CD8-positive, alpha-beta T cell (primary cell): ENCODE measurements at regions of chr1 and their contacts with region 1.

Region 1: GRCh38 chr1:185044981-185045813 is at the start of gene RNF2:
- DNase-seq: peak; percentile 61 to 95 (median 84)
- ATAC-seq: peak; percentile 91
- H3K4me3 ChIP-seq: peak within 1 kb of the TSS; percentile 74 to 85
- H3K4me3 Mint-ChIP-seq: peak within 1 kb of the TSS; percentile 92
- H3K27ac ChIP-seq: peak within 1 kb of the TSS; percentile 62 to 81
- H3K27ac Mint-ChIP-seq: peak within 1 kb of the TSS; percentile 93
- H3K4me1 ChIP-seq: peaks cover 23% of the 10 kb centered on the region
- H3K4me1 Mint-ChIP-seq: peaks cover 46% of the 10 kb centered on the region
- H3K27me3 ChIP-seq: no peaks in the 10 kb centered on the region
- H3K27me3 Mint-ChIP-seq: no peaks in the 10 kb centered on the region
- CTCF ChIP-seq: no peak
- total RNA-seq, gene RNF2: 13.3 to 13.6 TPM

Region 2: DNA sequence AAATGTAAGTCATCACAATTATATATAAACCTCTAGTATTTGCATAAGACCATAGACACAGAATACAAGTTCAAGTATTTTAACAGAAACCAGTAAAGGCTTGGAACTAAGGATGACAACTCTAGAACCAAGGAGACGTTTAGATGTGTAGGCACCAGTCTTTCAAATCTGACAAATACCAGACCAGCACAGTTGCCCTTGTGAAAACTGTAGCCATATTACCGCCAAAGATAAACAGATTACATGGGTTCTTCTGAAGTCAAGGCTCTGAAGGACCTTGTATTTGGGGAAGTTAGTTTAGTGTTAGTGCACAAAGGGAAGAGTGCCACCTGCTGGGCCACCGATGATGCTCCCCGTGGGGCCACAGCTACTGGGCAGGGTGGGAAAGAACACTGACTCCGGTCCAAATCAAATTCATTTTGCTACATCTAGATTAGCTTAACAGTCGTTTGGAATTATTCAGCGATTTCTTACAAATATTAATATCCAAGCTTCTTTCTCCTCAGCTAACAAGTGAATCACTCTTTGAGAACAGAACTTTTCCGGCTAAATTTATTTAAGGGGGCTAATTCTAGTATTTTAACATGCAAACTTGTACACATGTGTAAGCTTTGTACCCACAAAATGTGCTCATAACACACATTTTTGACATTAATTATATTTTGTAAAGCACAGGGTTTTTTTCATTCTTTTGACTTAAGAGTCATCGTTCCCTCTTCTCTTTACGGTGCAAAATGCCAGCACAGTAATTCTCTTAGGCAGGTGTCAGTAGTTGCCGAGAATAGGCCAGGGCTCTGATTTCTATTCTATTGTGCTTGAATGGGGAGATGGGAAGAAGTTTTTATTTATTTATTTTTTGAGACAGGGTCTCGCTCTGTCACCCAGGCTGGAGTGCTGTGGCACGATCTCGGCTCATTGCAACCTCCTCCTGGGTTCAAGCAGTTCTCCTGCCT is 62.9 kb before region 1 on chr1:
- CTCF ChIA-PET with region 1: interaction called, 3 read pairs
- POLR2A ChIA-PET with region 1: no interaction called
- intact Hi-C with region 1: loop called in 1 of 2 experiments (anchors 5 kb)
- DNase-seq: peak; percentile 57 to 86 (median 78)
- ATAC-seq: peak; percentile 97
- H3K4me3 ChIP-seq: no peak overlapping the region
- H3K4me3 Mint-ChIP-seq: no peak overlapping the region
- H3K27ac ChIP-seq: no peak overlapping the region
- H3K27ac Mint-ChIP-seq: no peak overlapping the region
- H3K4me1 ChIP-seq: no peaks in the 10 kb centered on the region
- H3K4me1 Mint-ChIP-seq: peaks cover 5% of the 10 kb centered on the region
- H3K27me3 ChIP-seq: no peaks in the 10 kb centered on the region
- H3K27me3 Mint-ChIP-seq: peaks cover 20% of the 10 kb centered on the region
- CTCF ChIP-seq: peak; percentile 87

Region 3: DNA sequence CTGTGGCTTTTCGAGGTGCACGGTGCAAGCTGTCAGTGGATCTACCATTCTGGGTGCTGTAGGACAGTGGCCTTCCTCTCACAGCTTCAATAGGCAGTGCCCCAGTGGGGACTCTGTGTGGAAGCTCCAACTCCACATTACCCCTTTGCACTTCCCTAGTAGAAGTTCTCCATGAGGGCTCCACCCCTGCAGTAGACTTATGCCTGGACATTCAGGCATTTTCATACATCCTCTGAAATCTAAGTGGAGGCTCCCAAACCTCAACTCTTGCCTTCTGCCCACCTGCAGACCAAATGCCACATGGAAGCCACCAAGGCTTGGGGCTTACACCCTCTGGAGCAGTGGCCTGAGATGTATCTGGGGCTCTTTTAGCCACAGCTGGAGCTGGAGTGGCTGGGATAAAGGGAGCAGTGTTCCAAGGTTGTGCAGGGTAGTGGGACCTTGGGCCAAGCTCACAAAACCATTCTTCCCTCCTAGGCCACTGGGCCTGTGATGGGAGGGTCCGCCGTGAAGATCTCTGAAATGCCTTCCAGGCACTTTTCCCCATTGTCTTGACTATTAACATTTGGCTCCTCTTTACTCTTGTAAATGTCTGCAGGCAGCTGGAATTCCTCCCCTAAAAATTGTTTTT is 17.8 kb before region 1 on chr1:
- CTCF ChIA-PET with region 1: no interaction called
- POLR2A ChIA-PET with region 1: no interaction called
- intact Hi-C with region 1: no loop called
- DNase-seq: no peak
- ATAC-seq: no peak
- H3K4me3 ChIP-seq: no peak overlapping the region
- H3K4me3 Mint-ChIP-seq: no peak overlapping the region
- H3K27ac ChIP-seq: no peak overlapping the region
- H3K27ac Mint-ChIP-seq: no peak overlapping the region
- H3K4me1 ChIP-seq: no peaks in the 10 kb centered on the region
- H3K4me1 Mint-ChIP-seq: no peaks in the 10 kb centered on the region
- H3K27me3 ChIP-seq: peaks cover 0 to 4% of the 10 kb centered on the region in 2 experiments
- H3K27me3 Mint-ChIP-seq: peaks cover 16% of the 10 kb centered on the region
- CTCF ChIP-seq: no peak

Region 4: DNA sequence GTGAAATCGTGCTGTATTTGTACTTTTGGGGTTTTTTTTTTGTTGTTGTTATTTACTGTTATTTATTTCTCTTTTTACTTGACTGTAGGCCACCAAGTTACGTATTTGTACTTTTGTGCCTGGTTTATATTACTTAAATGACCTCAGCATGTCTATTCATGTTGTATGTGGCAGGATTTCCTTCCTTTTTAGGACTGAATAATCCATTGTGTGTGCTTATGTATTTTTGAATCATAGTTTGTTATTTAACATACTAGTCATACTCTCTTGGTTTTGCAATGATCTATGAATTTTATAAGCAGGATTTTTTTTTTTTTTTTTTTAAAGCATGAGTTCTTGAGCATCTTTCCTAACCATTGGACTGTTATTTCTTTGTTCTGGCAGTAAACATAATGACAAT is 51.3 kb after region 1 on chr1:
- CTCF ChIA-PET with region 1: no interaction called
- POLR2A ChIA-PET with region 1: no interaction called
- intact Hi-C with region 1: loop called in 1 of 2 experiments (anchors 2 kb)
- DNase-seq: no peak
- ATAC-seq: no peak
- H3K4me3 ChIP-seq: no peak overlapping the region
- H3K4me3 Mint-ChIP-seq: no peak overlapping the region
- H3K27ac ChIP-seq: no peak overlapping the region
- H3K27ac Mint-ChIP-seq: no peak overlapping the region
- H3K4me1 ChIP-seq: no peaks in the 10 kb centered on the region
- H3K4me1 Mint-ChIP-seq: no peaks in the 10 kb centered on the region
- H3K27me3 ChIP-seq: no peaks in the 10 kb centered on the region
- H3K27me3 Mint-ChIP-seq: no peaks in the 10 kb centered on the region
- CTCF ChIP-seq: no peak

Region 5: DNA sequence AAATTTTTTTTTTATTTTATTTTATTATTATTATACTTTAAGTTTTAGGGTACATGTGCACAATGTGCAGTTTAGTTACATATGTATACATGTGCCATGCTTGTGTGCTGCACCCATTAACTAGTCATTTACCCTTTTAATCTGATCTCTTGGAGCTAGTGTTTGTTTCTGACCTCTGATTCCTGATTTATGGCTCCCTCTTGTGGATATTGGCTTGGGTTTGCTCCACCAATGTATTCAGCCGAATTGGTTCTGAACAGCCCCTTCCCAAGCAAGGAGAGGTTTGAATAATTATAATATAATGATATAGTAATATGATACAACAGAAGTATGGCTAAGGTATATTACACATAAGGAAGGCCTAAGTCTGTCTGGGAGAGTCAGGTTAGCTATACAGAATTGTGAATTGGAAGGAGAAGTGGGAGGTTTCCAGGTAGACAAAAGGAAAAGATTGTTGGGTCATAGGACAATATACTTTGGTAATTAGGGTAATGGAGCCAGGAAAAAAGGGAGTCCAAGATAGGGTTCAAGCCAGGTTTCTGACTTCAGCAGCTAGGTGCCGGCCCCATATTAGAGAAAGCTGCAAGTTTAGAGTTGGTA is 635.9 kb after region 1 on chr1:
- CTCF ChIA-PET with region 1: no interaction called
- POLR2A ChIA-PET with region 1: no interaction called
- intact Hi-C with region 1: no loop called
- DNase-seq: peak in 4 of 9 experiments; percentile 15 to 67 (median 40)
- ATAC-seq: peak; percentile 51
- H3K4me3 ChIP-seq: no peak overlapping the region
- H3K4me3 Mint-ChIP-seq: no peak overlapping the region
- H3K27ac ChIP-seq: no peak overlapping the region
- H3K27ac Mint-ChIP-seq: no peak overlapping the region
- H3K4me1 ChIP-seq: peaks cover 10% of the 10 kb centered on the region
- H3K4me1 Mint-ChIP-seq: peaks cover 26% of the 10 kb centered on the region
- H3K27me3 ChIP-seq: no peaks in the 10 kb centered on the region
- H3K27me3 Mint-ChIP-seq: no peaks in the 10 kb centered on the region
- CTCF ChIP-seq: peak; percentile 30

Region 6: DNA sequence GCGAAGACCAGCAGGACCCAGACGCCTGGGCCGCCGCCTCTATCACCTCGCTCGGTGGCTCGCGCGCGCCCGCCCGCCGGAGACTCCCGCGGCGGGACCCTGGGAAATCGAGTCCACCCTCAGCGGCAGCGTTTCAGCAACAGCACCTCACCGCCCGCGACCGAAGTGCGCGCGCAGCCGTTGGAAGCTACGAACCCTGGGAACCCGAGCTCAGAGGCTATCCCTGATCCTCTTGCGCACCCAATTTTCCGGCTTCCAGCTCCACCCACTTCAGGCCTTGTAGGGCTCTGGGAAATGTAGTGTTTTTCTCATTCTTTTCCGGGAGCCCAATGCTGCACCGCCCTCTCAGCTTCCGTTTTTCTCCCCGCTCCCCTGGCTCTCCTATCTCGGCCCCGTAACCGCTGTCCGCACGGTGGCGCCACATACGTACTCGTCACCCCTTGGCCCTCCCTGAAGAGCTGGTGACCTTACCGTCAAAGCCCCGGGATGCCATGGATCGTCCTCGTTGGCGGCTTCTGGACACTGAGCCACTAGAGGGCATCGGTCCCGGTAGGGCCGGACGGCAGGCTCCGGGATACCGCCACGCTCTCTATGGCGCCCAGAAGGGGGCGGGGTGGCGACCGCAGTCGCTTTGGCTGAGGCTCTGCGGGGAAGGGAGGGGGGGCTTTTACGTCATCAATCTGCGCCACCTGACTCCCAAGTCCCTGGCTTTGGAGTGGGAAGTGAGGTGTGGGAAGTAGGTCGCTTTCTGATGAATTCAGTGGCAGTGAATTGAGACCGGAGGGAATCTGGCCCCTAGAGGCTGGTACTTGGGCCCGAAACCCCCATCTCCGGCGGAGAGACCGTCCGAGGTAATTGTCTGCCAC is 1330.1 kb after region 1 on chr1 and contains the starts of genes ODR4 and TPR:
- CTCF ChIA-PET with region 1: no interaction called
- POLR2A ChIA-PET with region 1: no interaction called
- intact Hi-C with region 1: loop called in 1 of 2 experiments (anchors 5 kb)
- DNase-seq: peak; percentile 91 to 99 (median 95)
- ATAC-seq: peak; percentile 89
- H3K4me3 ChIP-seq: peak within 1 kb of the TSS; percentile 65 to 82
- H3K4me3 Mint-ChIP-seq: peak within 1 kb of the TSS; percentile 98
- H3K27ac ChIP-seq: peak within 1 kb of the TSS; percentile 92 to 96
- H3K27ac Mint-ChIP-seq: peak within 1 kb of the TSS; percentile 97
- H3K4me1 ChIP-seq: peaks cover 24% of the 10 kb centered on the region
- H3K4me1 Mint-ChIP-seq: peaks cover 43% of the 10 kb centered on the region
- H3K27me3 ChIP-seq: no peaks in the 10 kb centered on the region
- H3K27me3 Mint-ChIP-seq: no peaks in the 10 kb centered on the region
- CTCF ChIP-seq: peak; percentile 66
- total RNA-seq, gene ODR4: 25.4 to 28.7 TPM
- total RNA-seq, gene TPR: 89.3 to 98.0 TPM